ENCODE measurements at regions of chr17 and their contacts with region 1.

Region 1: DNA sequence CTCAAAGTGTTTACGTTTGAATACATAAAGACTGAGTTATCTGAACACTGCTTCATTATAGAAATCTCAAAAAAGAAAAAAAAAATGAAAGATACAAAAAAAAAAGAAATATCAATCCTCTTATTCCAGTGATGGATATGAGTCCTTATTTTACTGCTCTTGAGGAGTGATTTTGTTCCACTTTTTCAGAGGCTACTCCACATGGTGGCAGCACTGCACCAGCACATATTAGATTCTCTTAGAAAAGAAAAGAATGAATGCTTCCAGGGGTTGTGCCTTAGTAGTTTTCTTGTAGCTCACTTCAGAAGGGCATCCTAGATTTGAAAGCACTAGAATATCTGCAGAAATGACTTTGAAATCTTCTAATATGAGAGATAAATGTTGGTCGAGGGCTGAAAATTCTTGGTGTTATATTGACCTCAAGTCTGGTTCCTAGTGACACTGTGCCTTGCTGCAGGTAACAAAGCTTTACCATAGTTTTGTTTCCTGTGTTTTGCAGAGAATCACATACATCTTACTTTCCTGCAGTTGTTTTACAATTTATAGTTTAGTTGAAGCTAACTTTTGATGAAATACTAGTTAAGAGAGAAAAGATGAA is 25.9 kb downstream of the AP2B1 start:
- DNase-seq: peak in 25 of 35 experiments; percentile 3 to 56 (median 27)
- ATAC-seq: no peak
- H3K4me3 ChIP-seq: no peak overlapping the region
- H3K4me3 Mint-ChIP-seq: no peak overlapping the region
- H3K27ac ChIP-seq: no peak overlapping the region
- H3K27ac Mint-ChIP-seq: no peak overlapping the region
- H3K4me1 ChIP-seq: no peaks in the 10 kb centered on the region
- H3K4me1 Mint-ChIP-seq: peaks cover 8 to 13% (median 9%) of the 10 kb centered on the region in 3 donors
- H3K27me3 ChIP-seq: no peaks in the 10 kb centered on the region
- H3K27me3 Mint-ChIP-seq: no peaks in the 10 kb centered on the region

Region 2: GRCh38 chr17:35447499-35447898 is 165.5 kb before region 1 on chr17:
- CTCF ChIA-PET with region 1: no interaction called
- POLR2A ChIA-PET with region 1: no interaction called
- DNase-seq: no peak
- ATAC-seq: no peak
- H3K4me3 ChIP-seq: peak overlapping the region; percentile 5 to 58
- H3K4me3 Mint-ChIP-seq: peak overlapping the region; percentile 60 to 81 (median 80)
- H3K27ac ChIP-seq: peak overlapping the region; percentile 50
- H3K27ac Mint-ChIP-seq: peak overlapping the region; percentile 63 to 80
- H3K4me1 ChIP-seq: peaks cover 6 to 20% of the 10 kb centered on the region in 2 experiments
- H3K4me1 Mint-ChIP-seq: peaks cover 14 to 22% (median 15%) of the 10 kb centered on the region in 3 donors
- H3K27me3 ChIP-seq: no peaks in the 10 kb centered on the region
- H3K27me3 Mint-ChIP-seq: no peaks in the 10 kb centered on the region

Region 3: GRCh38 chr17:35731239-35731931 is 118.4 kb after region 1 on chr17 and contains the start of gene RASL10B:
- CTCF ChIA-PET with region 1: no interaction called
- POLR2A ChIA-PET with region 1: no interaction called
- DNase-seq: peak in 30 of 35 experiments; percentile 16 to 58 (median 41)
- ATAC-seq: peak; percentile 66 to 85 (median 80)
- H3K4me3 ChIP-seq: peak within 1 kb of the TSS; percentile 50 to 52
- H3K4me3 Mint-ChIP-seq: peak within 1 kb of the TSS; percentile 80 to 88 (median 80)
- H3K27ac ChIP-seq: no peak within 1 kb of the TSS
- H3K27ac Mint-ChIP-seq: peak within 1 kb of the TSS; percentile 20 to 81
- H3K4me1 ChIP-seq: peaks cover 8 to 21% of the 10 kb centered on the region in 2 experiments
- H3K4me1 Mint-ChIP-seq: peaks cover 24 to 30% (median 29%) of the 10 kb centered on the region in 3 donors
- H3K27me3 ChIP-seq: peaks cover 0 to 3% of the 10 kb centered on the region in 2 experiments
- H3K27me3 Mint-ChIP-seq: no peaks in the 10 kb centered on the region
- total RNA-seq, gene RASL10B: 0.38 to 0.56 (median 0.39) TPM

Region 4: DNA sequence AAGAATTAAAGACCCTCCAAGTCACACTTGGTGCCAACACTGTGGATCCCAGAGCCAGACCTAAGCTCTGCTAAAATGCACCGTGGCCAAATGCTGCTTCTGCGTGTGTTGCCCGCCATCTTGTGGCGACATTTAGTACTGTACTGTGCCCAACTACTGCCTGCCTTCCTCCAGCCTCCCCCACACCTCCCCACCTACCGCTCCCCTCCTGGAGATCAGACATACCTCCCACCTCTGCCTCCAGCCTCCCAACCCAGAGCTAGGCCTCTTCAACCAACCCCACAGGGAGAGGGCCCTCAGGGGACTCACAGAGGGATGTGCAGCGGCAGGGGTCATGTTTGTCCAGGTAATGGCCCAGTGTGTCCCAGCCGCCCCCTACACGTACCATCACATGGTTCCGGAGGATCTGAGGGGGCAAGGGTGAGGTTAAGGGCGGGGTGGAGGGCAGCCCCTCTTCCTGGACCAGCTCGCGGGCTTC is 134.6 kb after region 1 on chr17:
- CTCF ChIA-PET with region 1: interaction called, 33 to 38 read pairs
- POLR2A ChIA-PET with region 1: interaction called in 1 of 2 experiments, 3 read pairs
- DNase-seq: peak; percentile 49 to 89 (median 72)
- ATAC-seq: peak; percentile 91 to 97 (median 93)
- H3K4me3 ChIP-seq: no peak overlapping the region
- H3K4me3 Mint-ChIP-seq: no peak overlapping the region
- H3K27ac ChIP-seq: no peak overlapping the region
- H3K27ac Mint-ChIP-seq: no peak overlapping the region
- H3K4me1 ChIP-seq: peaks cover 0 to 13% of the 10 kb centered on the region in 2 experiments
- H3K4me1 Mint-ChIP-seq: peaks cover 0 to 13% (median 12%) of the 10 kb centered on the region in 3 donors
- H3K27me3 ChIP-seq: peaks cover 0 to 88% of the 10 kb centered on the region in 2 experiments
- H3K27me3 Mint-ChIP-seq: peaks cover 33 to 61% of the 10 kb centered on the region in 2 donors